AG04450 (cell line): ENCODE measurements at regions of chr12 and their contacts with region 1.

Region 1: GRCh38 chr12:115660211-115660805 is 617.2 kb downstream of the MED13L start:
- DNase-seq: no peak
- H3K4me3 ChIP-seq: no peak overlapping the region
- H3K27ac ChIP-seq: no peak overlapping the region
- H3K27me3 ChIP-seq: peaks cover 3% of the 10 kb centered on the region
- CTCF ChIP-seq: no peak

Region 2: GRCh38 chr12:115650026-115650425 is 10.3 kb before region 1 on chr12:
- CTCF ChIA-PET with region 1: no interaction called
- POLR2A ChIA-PET with region 1: interaction called, 10 read pairs
- DNase-seq: no peak
- H3K4me3 ChIP-seq: no peak overlapping the region
- H3K27ac ChIP-seq: no peak overlapping the region
- H3K27me3 ChIP-seq: peaks cover 3% of the 10 kb centered on the region
- CTCF ChIP-seq: no peak